Activated T-helper 1 cell treated with anti-CD3 and anti-CD28 coated beads, Interleukin-12 subunit alpha, Interleukin-12 subunit beta, Interleukin-2, Interleukin-4 antibody, amounts not matched to agents 30 ng/mL and 10 ng/mL and 1 ng/mL, durations not matched to agents 14 hours and 24 hours and 36 hours (primary cell): ENCODE measurements at regions of chr3 and their contacts with region 1.

Region 1: GRCh38 chr3:158672293-158673176 is at the start of gene LXN:
- DNase-seq: peak; percentile 75
- H3K4me3 Mint-ChIP-seq: peak within 1 kb of the TSS; percentile 91
- H3K27ac Mint-ChIP-seq: peak within 1 kb of the TSS; percentile 90
- H3K4me1 Mint-ChIP-seq: peaks cover 24% of the 10 kb centered on the region
- H3K27me3 Mint-ChIP-seq: no peaks in the 10 kb centered on the region
- total RNA-seq, gene LXN: 16.4 and 17.7 TPM in 2 replicates

Region 2: GRCh38 chr3:158520433-158520832 is 152.1 kb before region 1 on chr3:
- intact Hi-C with region 1: no loop called
- DNase-seq: no peak
- H3K4me3 Mint-ChIP-seq: no peak overlapping the region
- H3K27ac Mint-ChIP-seq: no peak overlapping the region
- H3K4me1 Mint-ChIP-seq: no peaks in the 10 kb centered on the region
- H3K27me3 Mint-ChIP-seq: no peaks in the 10 kb centered on the region

Region 3: DNA sequence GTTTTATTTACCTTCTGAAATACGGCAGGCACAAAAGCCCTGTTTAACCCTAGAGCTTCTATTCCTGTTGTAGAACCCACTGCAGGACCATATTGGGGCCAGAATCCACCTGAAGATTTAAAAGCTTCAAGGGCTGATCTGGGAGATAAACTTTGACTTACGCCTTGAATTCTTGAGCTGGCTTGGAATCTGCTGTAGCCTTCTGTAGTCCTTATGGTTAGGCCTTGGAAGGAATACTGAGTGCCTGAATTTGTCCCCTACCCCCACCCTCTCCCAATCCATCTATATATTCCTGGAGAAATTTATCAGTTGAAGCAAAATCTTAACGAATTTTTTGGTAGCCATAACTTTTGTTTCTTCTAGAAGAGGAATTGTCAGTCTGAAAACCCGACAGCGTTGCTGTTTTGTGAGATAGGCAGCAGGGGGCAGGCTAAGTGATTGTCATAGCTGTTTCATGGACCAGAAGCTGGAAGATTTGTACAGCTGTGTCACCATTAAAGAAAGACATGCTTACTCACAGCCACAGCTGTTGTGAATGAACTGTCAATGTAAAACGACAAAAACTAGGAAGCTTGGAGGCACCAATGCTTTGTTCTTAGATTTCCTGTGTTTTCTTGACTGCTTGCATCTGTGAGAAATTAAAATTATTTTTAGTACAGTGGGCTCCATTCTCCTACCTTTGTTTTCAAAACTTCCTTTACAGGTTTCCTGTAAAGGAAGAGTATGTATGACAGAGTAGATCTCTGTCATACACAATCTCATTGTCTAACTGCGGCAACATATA is 12.9 kb before region 1 on chr3:
- intact Hi-C with region 1: loop called (anchors 1 kb)
- DNase-seq: peak; percentile 40
- H3K4me3 Mint-ChIP-seq: no peak overlapping the region
- H3K27ac Mint-ChIP-seq: no peak overlapping the region
- H3K4me1 Mint-ChIP-seq: no peaks in the 10 kb centered on the region
- H3K27me3 Mint-ChIP-seq: no peaks in the 10 kb centered on the region

Region 4: GRCh38 chr3:158727206-158728060 is 54.9 kb after region 1 on chr3:
- intact Hi-C with region 1: loop called (anchors 1 kb)
- DNase-seq: peak; percentile 36
- H3K4me3 Mint-ChIP-seq: peak overlapping the region; percentile 47
- H3K27ac Mint-ChIP-seq: peak overlapping the region; percentile 6
- H3K4me1 Mint-ChIP-seq: peaks cover 37% of the 10 kb centered on the region
- H3K27me3 Mint-ChIP-seq: no peaks in the 10 kb centered on the region